Aorta (tissue), 5 donors: ENCODE measurements at regions of chr12 and their contacts with region 1.

Region 1: GRCh38 chr12:22228022-22228875 is 106.3 kb downstream of the ST8SIA1 start:
- DNase-seq: no peak
- ATAC-seq: peak; percentile 63
- H3K4me3 ChIP-seq: no peak overlapping the region
- H3K27ac ChIP-seq: no peak overlapping the region
- H3K4me1 ChIP-seq: peaks cover 0 to 4% of the 10 kb centered on the region in 2 donors
- H3K27me3 ChIP-seq: no peaks in the 10 kb centered on the region

Region 2: GRCh38 chr12:22287776-22288621 is 59.8 kb after region 1 on chr12:
- intact Hi-C with region 1: loop called in 1 of 2 experiments (anchors 10 kb)
- DNase-seq: no peak
- ATAC-seq: peak; percentile 16
- H3K4me3 ChIP-seq: no peak overlapping the region
- H3K27ac ChIP-seq: no peak overlapping the region
- H3K4me1 ChIP-seq: peaks cover under 1 to 1% of the 10 kb centered on the region in 2 donors
- H3K27me3 ChIP-seq: no peaks in the 10 kb centered on the region

Region 3: DNA sequence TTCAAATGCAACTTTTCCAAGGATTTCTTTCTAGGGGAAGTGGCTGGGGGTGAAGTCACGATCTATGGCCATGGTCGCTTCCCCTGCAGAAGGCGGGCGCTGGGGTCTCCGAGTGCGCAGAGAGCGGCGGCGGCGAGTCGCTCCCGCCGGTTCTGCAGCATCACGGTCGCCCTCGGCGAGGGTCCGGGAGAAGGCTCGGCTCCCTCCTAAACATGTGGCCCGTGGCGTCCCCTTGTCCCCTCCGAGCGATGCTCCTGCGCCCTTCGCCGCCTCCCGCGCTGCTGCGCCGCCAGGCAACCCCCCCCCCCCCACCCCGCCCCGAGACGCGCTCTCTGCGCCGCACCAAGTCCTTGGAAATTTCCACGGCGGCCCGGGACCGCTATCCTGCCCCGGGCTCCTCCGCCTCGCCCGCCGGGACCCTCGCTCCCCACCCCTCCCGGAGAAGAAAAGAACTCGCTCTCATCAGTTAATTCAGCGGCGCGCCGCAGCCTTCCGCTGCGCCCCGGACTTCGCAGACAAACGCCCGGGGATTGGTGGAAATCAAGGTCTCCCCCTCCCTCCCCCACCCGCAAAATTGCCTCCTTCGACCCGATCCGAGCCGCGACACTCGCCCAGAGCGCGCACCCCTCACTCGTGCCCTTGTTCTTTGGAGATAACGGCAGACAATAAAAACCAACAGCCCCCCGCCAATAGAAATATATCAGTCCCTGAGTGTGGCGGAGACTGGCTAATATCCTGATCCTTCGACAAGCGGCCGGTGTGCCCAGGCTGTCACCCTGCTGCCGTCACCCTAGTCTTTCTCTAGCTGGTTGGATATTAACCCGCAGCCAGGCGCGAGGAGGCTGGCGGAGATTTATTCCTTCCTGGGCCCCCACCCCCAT is 106.4 kb after region 1 on chr12 and contains the start of gene ST8SIA1:
- intact Hi-C with region 1: loop called in 1 of 2 experiments (anchors 10 kb)
- DNase-seq: peak; percentile 53 to 79
- ATAC-seq: peak; percentile 57
- H3K4me3 ChIP-seq: peak within 1 kb of the TSS; percentile 5 to 47
- H3K27ac ChIP-seq: no peak within 1 kb of the TSS
- H3K4me1 ChIP-seq: no peaks in the 10 kb centered on the region
- H3K27me3 ChIP-seq: no peaks in the 10 kb centered on the region
- total RNA-seq, gene ST8SIA1: 3.6 to 9.0 TPM